WTC11 (cell line): ENCODE measurements at regions of chr3 and their contacts with region 1.

Region 1: GRCh38 chr3:100603469-100603868 is 5.9 kb upstream of the ADGRG7 start:
- DNase-seq: no peak
- ATAC-seq: peak; percentile 86
- H3K4me3 Mint-ChIP-seq: no peak overlapping the region
- H3K27ac Mint-ChIP-seq: peak overlapping the region; percentile 63; the same call in 1 of the 2 replicates
- H3K4me1 Mint-ChIP-seq: peaks cover 25% of the 10 kb centered on the region
- H3K27me3 Mint-ChIP-seq: no peaks in the 10 kb centered on the region
- CTCF ChIP-seq: peak; percentile 20; the same call in 1 of the 2 replicates

Region 2: GRCh38 chr3:100590114-100590839 is 13.2 kb before region 1 on chr3:
- CTCF ChIA-PET with region 1: interaction called, 19 read pairs
- POLR2A ChIA-PET with region 1: interaction called, 7 read pairs
- DNase-seq: peak; percentile 49
- ATAC-seq: peak; percentile 88
- H3K4me3 Mint-ChIP-seq: peak overlapping the region; percentile 54
- H3K27ac Mint-ChIP-seq: no peak overlapping the region
- H3K4me1 Mint-ChIP-seq: peaks cover 6% of the 10 kb centered on the region
- H3K27me3 Mint-ChIP-seq: no peaks in the 10 kb centered on the region
- CTCF ChIP-seq: peak; percentile 87

Region 3: GRCh38 chr3:100796556-100796955 is 193.1 kb after region 1 on chr3:
- CTCF ChIA-PET with region 1: interaction called, 13 read pairs
- POLR2A ChIA-PET with region 1: no interaction called
- DNase-seq: no peak
- ATAC-seq: peak; percentile 58
- H3K4me3 Mint-ChIP-seq: no peak overlapping the region
- H3K27ac Mint-ChIP-seq: no peak overlapping the region
- H3K4me1 Mint-ChIP-seq: peaks cover 5% of the 10 kb centered on the region; the same call in 1 of the 2 replicates
- H3K27me3 Mint-ChIP-seq: no peaks in the 10 kb centered on the region; the same call in 1 of the 2 replicates
- CTCF ChIP-seq: no peak